Astrocyte of the cerebellum (primary cell): ENCODE measurements at regions of chr13 and their contacts with region 1.

Region 1: GRCh38 chr13:78298657-78299056 is 304.7 kb downstream of the POU4F1 start:
- DNase-seq: peak; percentile 8
- H3K4me3 ChIP-seq: no peak overlapping the region
- CTCF ChIP-seq: no peak

Region 2: DNA sequence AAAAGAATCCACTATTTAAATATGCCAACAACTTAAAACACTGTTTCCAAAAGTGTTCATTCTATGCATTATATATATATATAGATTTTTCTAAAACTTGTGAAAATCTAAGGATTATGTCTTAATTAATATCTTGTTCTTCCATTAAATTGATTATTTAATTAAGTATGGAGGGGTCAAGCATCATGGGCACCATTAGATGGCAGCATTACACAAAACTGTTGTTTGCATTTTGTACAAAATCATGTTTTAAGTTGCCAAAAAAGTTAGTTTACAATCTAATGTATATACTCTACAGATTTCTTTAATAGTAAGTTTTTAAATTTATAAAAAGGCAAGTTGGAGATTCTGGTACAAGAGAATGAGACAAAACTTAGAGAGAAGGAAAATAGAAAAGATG is 166.8 kb before region 1 on chr13:
- in situ Hi-C with region 1: no loop called
- DNase-seq: no peak
- H3K4me3 ChIP-seq: no peak overlapping the region
- CTCF ChIP-seq: peak; percentile 39

Region 3: GRCh38 chr13:78258304-78258703 is 40.4 kb before region 1 on chr13:
- in situ Hi-C with region 1: loop called (anchors 5 kb)
- DNase-seq: no peak
- H3K4me3 ChIP-seq: no peak overlapping the region
- CTCF ChIP-seq: no peak